HEK293 (cell line): ENCODE measurements at regions of chr20 and their contacts with region 1.

Region 1: GRCh38 chr20:19295076-19295475 is 82.6 kb downstream of the SLC24A3 start:
- H3K4me3 ChIP-seq: no peak overlapping the region
- H3K27ac ChIP-seq: no peak overlapping the region
- H3K4me1 ChIP-seq: no peaks in the 10 kb centered on the region
- CTCF ChIP-seq: no peak

Region 2: GRCh38 chr20:19284400-19285178 is 10.5 kb before region 1 on chr20:
- CTCF ChIA-PET with region 1: interaction called, 11 read pairs
- POLR2A ChIA-PET with region 1: interaction called, 3 read pairs
- H3K4me3 ChIP-seq: no peak overlapping the region
- H3K27ac ChIP-seq: no peak overlapping the region
- H3K4me1 ChIP-seq: no peaks in the 10 kb centered on the region
- CTCF ChIP-seq: no peak

Region 3: DNA sequence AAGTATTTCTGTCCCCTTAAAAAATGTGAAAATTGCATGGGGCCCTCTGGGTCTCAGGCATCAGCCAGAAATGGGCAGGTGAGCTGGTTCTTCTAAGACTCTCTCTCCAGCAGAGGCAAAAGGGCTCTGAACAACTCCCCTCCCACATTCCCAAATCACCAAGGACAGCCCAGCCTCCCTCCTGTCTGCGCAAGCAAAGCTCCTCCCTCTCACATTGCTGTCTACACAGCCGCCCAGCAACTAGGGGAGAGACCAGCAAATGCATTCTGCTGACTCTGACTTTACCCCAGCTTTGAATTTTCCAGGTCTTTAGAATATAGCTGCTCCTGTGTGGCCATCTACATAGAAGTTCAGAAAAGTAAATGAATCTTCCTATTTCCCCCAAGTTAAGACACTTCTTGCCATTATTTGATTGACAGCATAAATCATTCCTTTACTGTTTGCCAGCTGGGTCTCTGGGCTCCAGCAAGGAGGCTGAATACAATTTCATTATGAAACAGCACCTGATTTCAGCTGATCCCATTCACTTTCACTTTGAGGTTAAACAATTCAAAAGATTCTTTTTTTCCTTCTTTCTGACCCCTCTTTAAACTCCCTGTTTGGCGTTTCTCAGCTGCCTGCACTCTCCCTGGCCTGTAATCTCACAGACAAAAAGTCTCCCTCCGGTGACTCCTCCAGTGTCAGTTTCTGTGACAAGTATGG is 257.2 kb after region 1 on chr20:
- CTCF ChIA-PET with region 1: no interaction called
- POLR2A ChIA-PET with region 1: no interaction called
- H3K4me3 ChIP-seq: no peak overlapping the region
- H3K27ac ChIP-seq: no peak overlapping the region
- H3K4me1 ChIP-seq: no peaks in the 10 kb centered on the region
- CTCF ChIP-seq: no peak